K562 (cell line): ENCODE measurements at regions of chr11 and their contacts with region 1.

Region 1: GRCh38 chr11:46247664-46248063 is 29.8 kb upstream of the CREB3L1 start:
- DNase-seq: peak in 3 of 4 experiments; percentile 35 to 87 (median 71)
- ATAC-seq: peak; percentile 9; the same call in 2 of the 3 replicates
- H3K4me3 ChIP-seq: no peak overlapping the region
- H3K27ac ChIP-seq: peak overlapping the region; percentile 87
- H3K4me1 ChIP-seq: peaks cover 43 to 59% of the 10 kb centered on the region in 2 experiments
- H3K27me3 ChIP-seq: no peaks in the 10 kb centered on the region
- CTCF ChIP-seq: peak; percentile 79 to 92 (median 84)
- EP300 ChIP-seq: peak; percentile 46; the same call in 1 of the 2 replicates
- POLR2A ChIP-seq: no peak
- RAD21 ChIP-seq: peak; percentile 85 to 93

Region 2: DNA sequence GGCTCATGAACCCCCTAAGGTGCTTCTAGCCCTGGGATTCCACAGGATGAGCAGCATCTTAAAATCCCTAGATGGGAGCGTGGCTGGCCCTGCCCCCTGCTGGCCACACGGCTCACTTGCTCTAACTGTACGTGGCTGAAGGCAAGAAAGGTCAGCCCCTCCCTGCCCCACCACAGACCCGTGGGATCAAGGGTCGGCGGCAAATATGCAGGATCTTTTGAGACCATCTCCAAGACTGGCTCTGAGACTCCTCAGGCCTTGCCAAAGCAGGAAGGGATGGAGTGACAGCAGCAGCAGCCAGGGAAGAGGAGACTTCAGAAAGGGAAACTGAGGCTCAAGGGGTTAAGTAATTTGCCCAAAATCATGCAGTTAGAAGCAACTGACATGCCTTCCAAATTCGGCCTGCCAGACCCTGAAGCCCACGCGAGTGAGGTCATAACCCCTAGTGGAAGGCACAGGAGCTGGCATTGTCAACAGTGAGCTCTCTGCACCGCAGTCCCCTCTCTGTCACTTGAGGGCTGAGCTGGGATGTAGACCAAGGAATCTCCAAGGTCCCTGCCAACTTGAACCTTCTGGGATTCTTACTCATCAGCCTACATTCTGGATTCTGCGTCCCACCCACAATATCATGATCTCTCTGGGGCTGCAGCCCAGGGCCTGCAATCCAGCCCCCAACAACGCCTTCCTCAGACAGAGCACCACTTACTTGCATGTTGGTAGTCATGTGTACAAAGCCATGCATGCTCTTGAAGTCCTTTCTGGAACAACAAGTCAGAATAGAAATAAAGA is 61.2 kb after region 1 on chr11:
- CTCF ChIA-PET with region 1: interaction called, 20 read pairs
- POLR2A ChIA-PET with region 1: interaction called, 12 read pairs
- in situ Hi-C with region 1: loop called (anchors 10 kb)
- intact Hi-C with region 1: loop called (anchors 1 kb)
- DNase-seq: peak; percentile 83 to 88 (median 84)
- ATAC-seq: peak; percentile 92
- H3K4me3 ChIP-seq: no peak overlapping the region
- H3K27ac ChIP-seq: peak overlapping the region; percentile 75; the same call in 2 of the 3 replicates
- H3K4me1 ChIP-seq: peaks cover 17 to 45% of the 10 kb centered on the region in 2 experiments
- H3K27me3 ChIP-seq: no peaks in the 10 kb centered on the region
- CTCF ChIP-seq: peak; percentile 87 to 96 (median 91)
- EP300 ChIP-seq: no peak
- POLR2A ChIP-seq: no peak
- RAD21 ChIP-seq: peak; percentile 84 to 90

Region 3: DNA sequence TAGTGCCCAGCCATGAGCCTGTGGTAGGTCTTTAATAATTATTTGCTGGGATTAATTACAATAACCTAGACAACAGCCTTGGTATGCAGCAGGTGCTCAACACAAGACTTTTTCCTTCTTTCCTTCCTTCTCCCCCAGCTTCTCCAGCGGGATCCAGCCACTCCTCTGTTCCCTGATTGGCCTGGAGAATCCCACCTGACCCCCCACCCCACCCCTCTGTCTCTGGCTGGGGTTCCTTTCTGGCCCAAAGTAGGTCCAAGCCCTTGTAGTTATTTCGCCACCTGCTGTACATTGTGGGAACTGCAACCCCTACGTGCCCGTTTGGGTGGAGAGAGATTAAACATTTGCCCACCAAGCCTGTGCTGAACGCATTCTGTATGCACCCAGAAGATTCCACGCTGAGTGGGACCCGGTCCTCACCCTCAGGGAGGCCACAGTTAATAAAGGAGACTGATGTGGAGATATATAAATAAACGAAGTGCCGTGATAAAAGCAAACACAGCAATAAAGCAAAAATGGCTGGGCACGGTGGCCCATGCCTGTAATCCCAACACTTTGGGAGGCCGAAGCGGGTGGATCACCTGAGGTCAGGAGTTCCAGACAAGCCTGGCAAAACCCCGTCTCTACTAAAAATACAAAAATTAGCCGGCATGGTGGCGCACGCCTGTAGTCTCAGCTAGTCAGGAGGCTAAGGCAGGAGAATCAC is 67.5 kb after region 1 on chr11:
- CTCF ChIA-PET with region 1: interaction called, 9 read pairs
- POLR2A ChIA-PET with region 1: interaction called, 10 read pairs
- in situ Hi-C with region 1: loop called (anchors 10 kb)
- intact Hi-C with region 1: loop called (anchors 1 kb)
- DNase-seq: peak; percentile 86 to 95 (median 92)
- ATAC-seq: peak; percentile 87
- H3K4me3 ChIP-seq: no peak overlapping the region
- H3K27ac ChIP-seq: no peak overlapping the region
- H3K4me1 ChIP-seq: peaks cover 20 to 59% of the 10 kb centered on the region in 2 experiments
- H3K27me3 ChIP-seq: no peaks in the 10 kb centered on the region
- CTCF ChIP-seq: peak; percentile 81 to 94 (median 83)
- EP300 ChIP-seq: no peak
- POLR2A ChIP-seq: no peak
- RAD21 ChIP-seq: peak; percentile 58 to 73

Region 4: DNA sequence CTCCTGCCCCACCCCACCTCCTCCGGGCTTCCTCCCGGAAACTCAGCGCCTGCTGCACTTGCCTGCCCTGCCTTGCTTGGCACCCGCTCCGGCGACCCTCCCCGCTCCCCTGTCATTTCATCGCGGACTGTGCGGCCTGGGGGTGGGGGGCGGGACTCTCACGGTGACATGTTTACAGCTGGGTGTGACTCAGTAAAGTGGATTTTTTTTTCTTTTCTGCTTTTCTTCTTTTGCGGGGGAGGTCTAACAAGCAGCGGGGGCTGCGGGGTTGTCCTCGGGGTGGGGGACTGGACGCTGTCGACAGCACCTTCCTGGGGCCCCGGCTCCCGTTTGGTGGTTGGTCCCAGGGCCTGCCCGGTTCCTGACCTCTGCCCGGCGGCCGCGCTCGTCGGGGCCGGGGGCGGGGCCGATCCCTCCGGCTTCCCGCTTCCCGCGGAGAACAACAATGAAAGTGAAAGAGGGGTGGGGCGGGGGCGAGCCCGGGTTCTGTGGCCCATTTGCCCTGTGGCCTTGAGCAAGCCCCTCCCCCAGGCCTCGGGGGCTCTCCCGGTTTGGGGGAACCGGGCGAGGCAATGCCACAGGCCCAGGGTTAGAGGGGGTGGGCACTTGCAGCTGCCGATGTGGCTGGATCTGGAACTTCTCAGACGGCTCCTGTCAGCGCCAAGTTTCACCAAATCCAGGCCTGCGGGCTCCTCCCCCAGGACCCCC is 132.8 kb after region 1 on chr11:
- CTCF ChIA-PET with region 1: interaction called, 4 read pairs
- POLR2A ChIA-PET with region 1: interaction called, 5 read pairs
- in situ Hi-C with region 1: no loop called
- intact Hi-C with region 1: loop called (anchors 5 kb)
- DNase-seq: peak; percentile 86 to 90 (median 88)
- ATAC-seq: peak; percentile 62
- H3K4me3 ChIP-seq: peak overlapping the region; percentile 75
- H3K27ac ChIP-seq: peak overlapping the region; percentile 96
- H3K4me1 ChIP-seq: peaks cover 25 to 66% of the 10 kb centered on the region in 2 experiments
- H3K27me3 ChIP-seq: no peaks in the 10 kb centered on the region
- CTCF ChIP-seq: no peak
- EP300 ChIP-seq: no peak
- POLR2A ChIP-seq: peak; percentile 66
- RAD21 ChIP-seq: no peak

Region 5: GRCh38 chr11:46616998-46617675 is 369.5 kb after region 1 on chr11 and contains the starts of genes ATG13 and HARBI1:
- CTCF ChIA-PET with region 1: no interaction called
- POLR2A ChIA-PET with region 1: no interaction called
- in situ Hi-C with region 1: no loop called
- intact Hi-C with region 1: no loop called
- DNase-seq: peak; percentile 89 to 92 (median 91)
- ATAC-seq: peak; percentile 92
- H3K4me3 ChIP-seq: peak within 1 kb of the TSS; percentile 99
- H3K27ac ChIP-seq: peak within 1 kb of the TSS; percentile 100
- H3K4me1 ChIP-seq: peaks cover 17 to 18% of the 10 kb centered on the region in 2 experiments; a peak in 4 of 5 replicates
- H3K27me3 ChIP-seq: no peaks in the 10 kb centered on the region
- CTCF ChIP-seq: no peak
- EP300 ChIP-seq: peak; percentile 99
- POLR2A ChIP-seq: 0 out of 2 replicates have a peak, but pooled peaks have one; percentile 71
- RAD21 ChIP-seq: no peak
- polyA plus RNA-seq, gene ATG13: 13.1 to 15.6 TPM
- polyA plus RNA-seq, gene HARBI1: 6.0 to 8.4 TPM

Region 6: DNA sequence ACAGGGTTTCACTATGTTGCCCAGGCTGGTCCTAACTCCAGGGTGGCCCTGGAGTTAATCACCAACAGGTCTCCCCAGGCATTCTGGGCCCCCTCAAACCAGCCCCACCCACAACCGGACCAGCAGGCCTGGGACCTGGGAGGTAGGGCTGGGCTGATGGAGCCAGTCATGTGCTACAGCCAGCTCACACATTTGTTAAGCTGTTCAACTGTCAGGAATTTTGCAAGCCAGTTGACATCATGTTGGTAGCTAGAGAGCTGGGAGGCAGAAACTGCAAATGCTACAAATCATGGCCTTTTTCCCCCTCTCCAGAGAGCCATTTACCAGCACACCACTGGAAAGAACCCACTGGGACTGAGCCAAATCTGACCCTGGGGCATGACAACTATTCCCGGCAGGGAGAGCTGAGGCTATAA is 445.9 kb after region 1 on chr11:
- CTCF ChIA-PET with region 1: no interaction called
- POLR2A ChIA-PET with region 1: no interaction called
- in situ Hi-C with region 1: no loop called
- intact Hi-C with region 1: no loop called
- DNase-seq: no peak
- ATAC-seq: no peak
- H3K4me3 ChIP-seq: no peak overlapping the region
- H3K27ac ChIP-seq: no peak overlapping the region
- H3K4me1 ChIP-seq: peaks cover 17 to 25% of the 10 kb centered on the region in 2 experiments; a peak in 4 of 5 replicates
- H3K27me3 ChIP-seq: no peaks in the 10 kb centered on the region
- CTCF ChIP-seq: no peak
- EP300 ChIP-seq: no peak
- POLR2A ChIP-seq: no peak
- RAD21 ChIP-seq: no peak

Region 7: DNA sequence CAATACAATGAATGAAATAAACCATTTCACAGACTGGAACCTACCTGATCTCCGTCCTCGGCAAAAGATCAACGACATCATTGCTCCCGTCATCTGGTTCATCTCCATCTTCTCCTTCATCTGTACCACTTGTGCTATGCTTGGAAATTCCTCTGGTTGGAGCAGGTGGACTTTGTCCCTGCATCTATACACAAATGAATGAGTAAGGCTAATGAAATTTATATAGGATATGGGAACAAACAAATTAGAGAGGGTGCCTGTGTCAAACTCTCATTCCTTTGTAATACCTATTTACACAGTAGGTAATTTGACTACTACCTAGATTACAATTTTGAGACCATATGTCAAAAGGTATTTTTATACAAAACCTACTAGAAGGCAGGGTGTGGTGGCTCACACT is 530.8 kb after region 1 on chr11:
- CTCF ChIA-PET with region 1: no interaction called
- POLR2A ChIA-PET with region 1: no interaction called
- in situ Hi-C with region 1: no loop called
- intact Hi-C with region 1: no loop called
- DNase-seq: no peak
- ATAC-seq: no peak
- H3K4me3 ChIP-seq: no peak overlapping the region
- H3K27ac ChIP-seq: no peak overlapping the region
- H3K4me1 ChIP-seq: no peaks in the 10 kb centered on the region
- H3K27me3 ChIP-seq: no peaks in the 10 kb centered on the region
- CTCF ChIP-seq: no peak
- EP300 ChIP-seq: no peak
- POLR2A ChIP-seq: no peak
- RAD21 ChIP-seq: no peak